Left ventricle myocardium superior (tissue), 1 donor: ENCODE measurements at regions of chr10 and their contacts with region 1.

Region 1: GRCh38 chr10:95601116-95601719 is 40.0 kb upstream of the SORBS1 start:
- DNase-seq: peak; percentile 77
- ATAC-seq: peak; percentile 88

Region 2: GRCh38 chr10:95319239-95319638 is 282.0 kb before region 1 on chr10:
- intact Hi-C with region 1: no loop called
- DNase-seq: no peak
- ATAC-seq: no peak

Region 3: GRCh38 chr10:95374597-95375209 is 226.5 kb before region 1 on chr10:
- intact Hi-C with region 1: loop called (anchors 2 kb)
- DNase-seq: peak; percentile 73
- ATAC-seq: peak; percentile 77

Region 4: GRCh38 chr10:95429639-95430038 is 171.6 kb before region 1 on chr10:
- intact Hi-C with region 1: loop called (anchors 5 kb)
- DNase-seq: no peak
- ATAC-seq: no peak

Region 5: GRCh38 chr10:95635319-95635733 is 34.1 kb after region 1 on chr10:
- intact Hi-C with region 1: no loop called
- DNase-seq: no peak
- ATAC-seq: no peak

Region 6: GRCh38 chr10:95716466-95717224 is 115.4 kb after region 1 on chr10:
- intact Hi-C with region 1: no loop called
- DNase-seq: no peak
- ATAC-seq: no peak